Naive thymus-derived CD4-positive, alpha-beta T cell (primary cell): ENCODE measurements at regions of chr3 and their contacts with region 1.

Region 1: DNA sequence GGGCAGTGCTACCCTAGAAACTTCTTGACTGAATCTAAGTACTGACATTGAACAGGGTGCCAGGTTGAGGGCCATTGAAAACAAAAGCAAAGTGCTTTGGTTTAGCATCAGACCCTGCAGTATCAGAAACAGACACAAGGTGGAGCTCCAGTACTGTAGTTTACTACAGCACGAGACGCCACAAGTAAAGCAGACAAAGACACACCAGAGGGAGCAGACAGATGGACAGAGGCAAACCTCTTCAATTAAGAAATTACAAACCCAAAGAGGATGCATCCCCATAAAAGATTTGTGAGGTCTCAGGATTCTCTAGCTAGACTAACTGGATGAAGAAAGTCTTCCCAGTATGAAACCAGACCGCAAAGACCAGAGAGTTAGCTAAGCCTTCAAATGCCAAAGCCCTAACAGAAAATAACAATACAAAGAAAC is 16.6 kb downstream of the TOP2B start:
- DNase-seq: peak; percentile 50 to 84 (median 76)
- ATAC-seq: peak; percentile 99
- H3K4me3 ChIP-seq: no peak overlapping the region
- H3K4me3 Mint-ChIP-seq: peak overlapping the region in 4 of 10 donors; percentile 2 to 16 (median 14)
- H3K27ac ChIP-seq: no peak overlapping the region
- H3K27ac Mint-ChIP-seq: peak overlapping the region in 8 of 9 donors; percentile 2 to 53 (median 12)
- H3K4me1 ChIP-seq: peaks cover 0 to 10% of the 10 kb centered on the region in 2 donors
- H3K4me1 Mint-ChIP-seq: peaks cover 22 to 59% (median 54%) of the 10 kb centered on the region in 7 donors
- H3K27me3 ChIP-seq: no peaks in the 10 kb centered on the region
- H3K27me3 Mint-ChIP-seq: no peaks in the 10 kb centered on the region

Region 2: GRCh38 chr3:25604107-25604805 is 43.9 kb before region 1 on chr3:
- CTCF ChIA-PET with region 1: interaction called, 3 read pairs
- POLR2A ChIA-PET with region 1: no interaction called
- intact Hi-C with region 1: loop called in 1 of 2 experiments (anchors 5 kb)
- DNase-seq: no peak
- ATAC-seq: peak; percentile 92
- H3K4me3 ChIP-seq: no peak overlapping the region
- H3K4me3 Mint-ChIP-seq: no peak overlapping the region
- H3K27ac ChIP-seq: no peak overlapping the region
- H3K27ac Mint-ChIP-seq: peak overlapping the region in 4 of 9 donors; percentile 32 to 63 (median 41)
- H3K4me1 ChIP-seq: no peaks in the 10 kb centered on the region
- H3K4me1 Mint-ChIP-seq: peaks cover 0 to 5% (median 0%) of the 10 kb centered on the region in 7 donors
- H3K27me3 ChIP-seq: no peaks in the 10 kb centered on the region
- H3K27me3 Mint-ChIP-seq: no peaks in the 10 kb centered on the region

Region 3: DNA sequence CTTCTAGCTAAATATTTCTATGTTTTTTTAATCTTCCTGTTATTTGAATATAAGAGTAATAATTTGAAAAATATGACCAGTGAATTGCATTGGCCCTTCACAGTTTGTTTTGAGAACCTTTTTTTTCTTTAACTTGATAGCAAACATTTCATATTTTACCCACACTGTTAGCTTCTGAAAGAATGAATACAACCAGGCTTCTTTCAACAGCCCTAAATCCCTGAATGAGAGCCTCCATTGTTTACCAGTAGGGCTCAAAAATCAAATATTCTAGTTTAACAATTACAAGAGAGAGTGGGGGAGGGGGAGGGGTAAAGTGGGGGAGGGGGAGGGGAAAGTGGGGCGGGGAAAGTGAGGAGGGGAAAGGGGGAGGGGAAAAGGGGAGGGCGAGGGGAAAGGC is 31.0 kb after region 1 on chr3:
- CTCF ChIA-PET with region 1: no interaction called
- POLR2A ChIA-PET with region 1: no interaction called
- intact Hi-C with region 1: no loop called
- DNase-seq: no peak
- ATAC-seq: no peak
- H3K4me3 ChIP-seq: no peak overlapping the region
- H3K4me3 Mint-ChIP-seq: no peak overlapping the region
- H3K27ac ChIP-seq: no peak overlapping the region
- H3K27ac Mint-ChIP-seq: no peak overlapping the region
- H3K4me1 ChIP-seq: no peaks in the 10 kb centered on the region
- H3K4me1 Mint-ChIP-seq: peaks cover 0 to 4% (median 0%) of the 10 kb centered on the region in 7 donors
- H3K27me3 ChIP-seq: no peaks in the 10 kb centered on the region
- H3K27me3 Mint-ChIP-seq: peaks cover 0 to 10% (median 0%) of the 10 kb centered on the region in 5 donors

Region 4: DNA sequence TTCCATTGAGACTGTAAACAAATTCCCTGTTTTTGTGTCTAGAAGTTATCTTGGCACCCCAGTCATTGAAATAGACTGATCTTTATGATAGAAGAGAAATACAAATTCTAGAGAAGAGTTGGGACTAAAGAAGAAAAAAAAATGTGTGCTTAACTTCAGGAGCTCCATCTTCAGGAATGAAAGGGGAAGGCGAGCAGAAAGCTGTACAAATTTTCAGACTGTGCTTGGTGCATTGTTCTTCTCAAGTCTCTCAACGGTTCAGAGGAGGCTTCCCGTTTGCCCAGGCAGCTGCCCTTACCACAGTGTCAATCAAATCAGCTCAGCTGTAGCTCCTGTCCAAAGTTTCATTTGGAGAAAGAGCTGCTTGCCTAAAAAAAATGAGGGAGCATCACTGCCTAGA is 183.5 kb after region 1 on chr3:
- CTCF ChIA-PET with region 1: interaction called, 12 read pairs
- POLR2A ChIA-PET with region 1: no interaction called
- intact Hi-C with region 1: loop called in 1 of 2 experiments (anchors 1 kb)
- DNase-seq: no peak
- ATAC-seq: no peak
- H3K4me3 ChIP-seq: no peak overlapping the region
- H3K4me3 Mint-ChIP-seq: no peak overlapping the region
- H3K27ac ChIP-seq: no peak overlapping the region
- H3K27ac Mint-ChIP-seq: peak overlapping the region in 1 of 9 donors; percentile 23
- H3K4me1 ChIP-seq: no peaks in the 10 kb centered on the region
- H3K4me1 Mint-ChIP-seq: peaks cover 0 to 8% (median 4%) of the 10 kb centered on the region in 7 donors
- H3K27me3 ChIP-seq: no peaks in the 10 kb centered on the region
- H3K27me3 Mint-ChIP-seq: peaks cover 5 to 19% (median 7%) of the 10 kb centered on the region in 5 donors

Region 5: GRCh38 chr3:25910997-25911396 is 262.9 kb after region 1 on chr3:
- CTCF ChIA-PET with region 1: interaction called, 6 read pairs
- POLR2A ChIA-PET with region 1: no interaction called
- intact Hi-C with region 1: loop called (anchors 1 to 2 kb)
- DNase-seq: peak in 7 of 9 donors; percentile 8 to 29 (median 23)
- ATAC-seq: peak; percentile 49
- H3K4me3 ChIP-seq: no peak overlapping the region
- H3K4me3 Mint-ChIP-seq: no peak overlapping the region
- H3K27ac ChIP-seq: no peak overlapping the region
- H3K27ac Mint-ChIP-seq: no peak overlapping the region
- H3K4me1 ChIP-seq: peaks cover 0 to 10% of the 10 kb centered on the region in 2 donors
- H3K4me1 Mint-ChIP-seq: peaks cover 0 to 10% (median 8%) of the 10 kb centered on the region in 7 donors
- H3K27me3 ChIP-seq: no peaks in the 10 kb centered on the region
- H3K27me3 Mint-ChIP-seq: peaks cover 0 to 11% (median 0%) of the 10 kb centered on the region in 5 donors

Region 6: GRCh38 chr3:25971736-25972135 is 323.6 kb after region 1 on chr3:
- CTCF ChIA-PET with region 1: no interaction called
- POLR2A ChIA-PET with region 1: no interaction called
- intact Hi-C with region 1: no loop called
- DNase-seq: no peak
- ATAC-seq: no peak
- H3K4me3 ChIP-seq: no peak overlapping the region
- H3K4me3 Mint-ChIP-seq: no peak overlapping the region
- H3K27ac ChIP-seq: no peak overlapping the region
- H3K27ac Mint-ChIP-seq: no peak overlapping the region
- H3K4me1 ChIP-seq: no peaks in the 10 kb centered on the region
- H3K4me1 Mint-ChIP-seq: no peaks in the 10 kb centered on the region
- H3K27me3 ChIP-seq: no peaks in the 10 kb centered on the region
- H3K27me3 Mint-ChIP-seq: peaks cover 0 to 20% (median 6%) of the 10 kb centered on the region in 5 donors

Region 7: DNA sequence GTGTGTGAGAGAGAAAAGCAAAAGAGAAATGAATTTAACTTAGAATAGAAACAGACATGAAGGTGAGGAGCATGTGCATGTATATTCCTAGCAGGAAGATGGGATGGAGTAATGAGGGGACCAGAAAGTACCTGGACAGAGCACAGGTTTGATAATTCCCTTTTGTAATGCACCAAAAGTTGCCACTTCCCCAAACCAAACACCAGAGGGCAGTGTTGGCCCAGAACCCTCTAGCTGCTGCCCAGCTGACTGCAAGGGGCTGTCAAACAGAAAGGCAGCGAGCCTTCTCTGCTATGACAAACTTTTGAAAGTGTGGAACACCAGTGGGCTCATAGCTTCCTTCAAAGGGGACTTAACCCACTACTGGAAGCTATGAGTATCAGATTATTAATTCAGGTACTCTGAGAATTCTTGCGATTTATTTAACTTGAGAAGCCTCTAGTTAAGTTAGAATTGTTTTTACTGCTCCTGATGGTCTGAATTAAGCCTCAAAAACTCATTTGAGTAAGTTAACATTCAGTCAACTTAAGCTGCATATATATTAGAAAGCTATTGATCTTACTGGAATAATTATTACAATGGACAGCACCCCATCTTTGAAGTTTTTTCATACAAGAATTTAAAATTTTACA is 1486.2 kb after region 1 on chr3:
- CTCF ChIA-PET with region 1: no interaction called
- POLR2A ChIA-PET with region 1: no interaction called
- intact Hi-C with region 1: loop called in 1 of 2 experiments (anchors 5 kb)
- DNase-seq: peak; percentile 9 to 56 (median 43)
- ATAC-seq: peak; percentile 83
- H3K4me3 ChIP-seq: no peak overlapping the region
- H3K4me3 Mint-ChIP-seq: no peak overlapping the region
- H3K27ac ChIP-seq: no peak overlapping the region
- H3K27ac Mint-ChIP-seq: no peak overlapping the region
- H3K4me1 ChIP-seq: no peaks in the 10 kb centered on the region
- H3K4me1 Mint-ChIP-seq: no peaks in the 10 kb centered on the region
- H3K27me3 ChIP-seq: peaks cover 0 to 3% of the 10 kb centered on the region in 2 donors
- H3K27me3 Mint-ChIP-seq: peaks cover 0 to 11% (median 0%) of the 10 kb centered on the region in 5 donors